Cardiac septum (tissue), 1 donor: ENCODE measurements at regions of chr17 and their contacts with region 1.

Region 1: DNA sequence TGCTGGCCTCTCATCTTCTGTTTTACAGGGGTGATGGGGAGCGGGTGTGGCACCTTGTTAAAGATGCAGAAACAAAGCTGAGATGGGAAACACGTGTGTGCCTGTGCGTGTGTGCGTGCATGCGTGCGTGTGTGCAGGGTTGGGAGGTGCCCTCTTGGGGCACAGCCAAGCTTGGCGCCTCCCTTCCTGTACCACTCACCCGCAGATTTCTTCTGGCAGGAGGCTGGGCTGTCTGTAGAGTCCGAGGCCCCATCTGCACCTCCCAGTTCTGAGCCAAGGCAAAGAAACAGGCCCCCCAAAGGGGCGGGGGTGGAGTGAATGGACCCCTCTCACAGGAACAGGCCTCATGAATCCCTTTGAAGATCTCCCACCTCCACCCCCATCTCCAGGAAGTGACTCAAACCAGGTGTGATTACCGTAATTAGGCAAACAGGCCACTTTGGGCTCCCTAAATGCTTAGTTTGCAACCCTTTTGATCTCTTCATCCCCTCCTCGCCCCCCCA is 20.9 kb downstream of the TNS4 start:
- DNase-seq: no peak

Region 2: GRCh38 chr17:40378966-40379365 is 101.6 kb before region 1 on chr17:
- intact Hi-C with region 1: no loop called
- DNase-seq: no peak

Region 3: DNA sequence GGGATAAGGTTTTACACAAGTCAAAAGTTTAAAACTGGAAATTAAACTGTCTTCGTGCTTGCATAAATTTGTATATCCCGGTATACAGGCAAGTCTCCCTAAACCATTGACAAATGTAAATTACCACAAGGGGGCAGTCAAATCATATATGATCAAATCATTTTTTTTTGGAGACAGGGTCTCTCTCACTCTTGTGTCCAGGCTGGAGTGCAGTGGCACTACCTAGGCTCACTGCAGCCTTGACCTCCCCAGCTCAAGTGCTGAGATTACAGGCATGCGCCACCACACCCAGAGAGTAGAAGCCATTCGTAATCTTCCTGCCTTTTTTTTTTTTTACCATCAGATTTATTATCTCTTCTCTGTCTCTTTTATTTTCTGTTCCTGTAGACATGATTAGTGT is 81.4 kb before region 1 on chr17:
- intact Hi-C with region 1: loop called (anchors 10 kb)
- DNase-seq: no peak

Region 4: GRCh38 chr17:40443583-40444327 is 36.8 kb before region 1 on chr17:
- intact Hi-C with region 1: loop called (anchors 1 kb)
- DNase-seq: peak; percentile 85

Region 5: GRCh38 chr17:40531051-40531991 is 50.8 kb after region 1 on chr17:
- intact Hi-C with region 1: loop called (anchors 5 kb)
- DNase-seq: peak; percentile 60